Ascending aorta (tissue), 2 donors: ENCODE measurements at regions of chr12 and their contacts with region 1.

Region 1: DNA sequence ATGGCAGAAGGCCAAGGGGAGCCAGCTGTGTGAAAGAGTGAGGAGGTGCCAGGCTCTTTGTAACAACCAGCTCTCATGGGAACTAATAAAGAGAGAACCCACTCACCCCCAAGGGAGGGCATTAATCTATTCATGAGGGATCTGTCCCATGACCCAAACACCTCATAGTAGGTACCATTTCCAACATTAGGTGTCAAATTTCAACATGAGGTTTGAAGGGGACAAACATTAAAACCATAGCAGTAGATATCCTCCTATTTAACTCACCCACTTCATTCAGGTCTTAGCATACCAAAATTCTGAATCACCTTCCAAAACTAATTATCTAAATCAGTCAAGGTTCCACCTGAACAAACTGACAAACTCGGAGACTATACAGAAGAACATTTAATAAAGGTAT is 75.3 kb downstream of the PPFIA2 start:
- DNase-seq: no peak
- H3K4me3 ChIP-seq: no peak overlapping the region
- H3K27ac ChIP-seq: no peak overlapping the region
- H3K4me1 ChIP-seq: no peaks in the 10 kb centered on the region
- H3K27me3 ChIP-seq: no peaks in the 10 kb centered on the region
- CTCF ChIP-seq: no peak

Region 2: GRCh38 chr12:81573228-81573627 is 110.7 kb before region 1 on chr12:
- intact Hi-C with region 1: no loop called
- DNase-seq: no peak
- H3K4me3 ChIP-seq: no peak overlapping the region
- H3K27ac ChIP-seq: no peak overlapping the region
- H3K4me1 ChIP-seq: peaks cover 0 to 9% of the 10 kb centered on the region in 2 donors
- H3K27me3 ChIP-seq: no peaks in the 10 kb centered on the region
- CTCF ChIP-seq: no peak

Region 3: GRCh38 chr12:81705586-81705985 is 21.7 kb after region 1 on chr12:
- intact Hi-C with region 1: loop called (anchors 1 kb)
- DNase-seq: no peak
- H3K4me3 ChIP-seq: no peak overlapping the region
- H3K27ac ChIP-seq: no peak overlapping the region
- H3K4me1 ChIP-seq: no peaks in the 10 kb centered on the region
- H3K27me3 ChIP-seq: no peaks in the 10 kb centered on the region
- CTCF ChIP-seq: no peak

Region 4: DNA sequence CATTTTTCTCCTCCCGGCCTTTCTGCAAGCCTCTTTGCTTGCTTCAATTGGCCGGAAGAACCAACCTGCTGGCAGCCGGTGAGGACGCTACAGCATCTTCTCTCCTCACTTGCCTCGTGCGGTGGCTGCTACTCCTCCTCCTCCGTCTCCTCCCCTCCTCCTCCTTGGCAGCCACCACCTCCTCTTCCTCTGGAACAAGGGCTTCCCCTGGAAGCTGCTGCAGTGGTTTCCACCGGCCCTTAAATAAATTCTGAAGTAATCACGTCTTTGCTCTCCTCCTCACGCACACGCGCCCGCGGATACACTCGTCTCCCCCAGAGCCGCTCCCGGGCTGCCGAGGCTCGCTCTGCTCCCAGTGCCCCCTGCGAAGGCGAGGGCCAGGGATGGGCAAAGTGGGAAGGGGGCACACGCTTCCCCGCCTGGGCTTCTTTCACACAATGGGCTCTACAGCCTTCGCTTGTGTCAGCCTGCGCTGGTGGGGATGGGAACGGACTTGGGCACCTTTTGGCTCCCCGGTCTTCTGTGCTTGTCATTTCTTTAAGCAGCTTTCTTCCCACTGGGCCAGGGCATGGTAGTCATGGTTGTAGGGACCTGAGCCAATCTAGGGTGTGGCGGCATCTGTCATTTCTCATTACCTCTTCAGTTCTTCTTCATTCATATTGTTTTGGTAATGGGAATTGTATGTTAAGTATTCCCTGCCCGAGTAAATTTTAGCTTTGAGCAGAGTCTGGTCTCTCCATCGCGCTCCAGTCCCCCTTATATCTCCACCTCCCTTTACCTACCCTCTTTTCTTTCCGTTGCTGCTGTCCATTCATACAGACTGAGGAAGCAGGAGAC is 75.6 kb after region 1 on chr12 and contains the start of gene PPFIA2:
- intact Hi-C with region 1: no loop called
- DNase-seq: peak in 1 of 2 donors; percentile 69
- H3K4me3 ChIP-seq: peak within 1 kb of the TSS; percentile 59 to 95
- H3K27ac ChIP-seq: peak within 1 kb of the TSS; percentile 10 to 53
- H3K4me1 ChIP-seq: peaks cover 0 to 4% of the 10 kb centered on the region in 2 donors
- H3K27me3 ChIP-seq: no peaks in the 10 kb centered on the region
- CTCF ChIP-seq: no peak
- total RNA-seq, gene PPFIA2: 15.0 TPM

Region 5: GRCh38 chr12:81809829-81810595 is 126.1 kb after region 1 on chr12:
- intact Hi-C with region 1: no loop called
- DNase-seq: no peak
- H3K4me3 ChIP-seq: peak overlapping the region; percentile 17 to 19
- H3K27ac ChIP-seq: peak overlapping the region; percentile 68 to 71
- H3K4me1 ChIP-seq: peaks cover 7 to 17% of the 10 kb centered on the region in 2 donors
- H3K27me3 ChIP-seq: no peaks in the 10 kb centered on the region
- CTCF ChIP-seq: no peak